AG04449 (cell line): ENCODE measurements at regions of chr20 and their contacts with region 1.

Region 1: DNA sequence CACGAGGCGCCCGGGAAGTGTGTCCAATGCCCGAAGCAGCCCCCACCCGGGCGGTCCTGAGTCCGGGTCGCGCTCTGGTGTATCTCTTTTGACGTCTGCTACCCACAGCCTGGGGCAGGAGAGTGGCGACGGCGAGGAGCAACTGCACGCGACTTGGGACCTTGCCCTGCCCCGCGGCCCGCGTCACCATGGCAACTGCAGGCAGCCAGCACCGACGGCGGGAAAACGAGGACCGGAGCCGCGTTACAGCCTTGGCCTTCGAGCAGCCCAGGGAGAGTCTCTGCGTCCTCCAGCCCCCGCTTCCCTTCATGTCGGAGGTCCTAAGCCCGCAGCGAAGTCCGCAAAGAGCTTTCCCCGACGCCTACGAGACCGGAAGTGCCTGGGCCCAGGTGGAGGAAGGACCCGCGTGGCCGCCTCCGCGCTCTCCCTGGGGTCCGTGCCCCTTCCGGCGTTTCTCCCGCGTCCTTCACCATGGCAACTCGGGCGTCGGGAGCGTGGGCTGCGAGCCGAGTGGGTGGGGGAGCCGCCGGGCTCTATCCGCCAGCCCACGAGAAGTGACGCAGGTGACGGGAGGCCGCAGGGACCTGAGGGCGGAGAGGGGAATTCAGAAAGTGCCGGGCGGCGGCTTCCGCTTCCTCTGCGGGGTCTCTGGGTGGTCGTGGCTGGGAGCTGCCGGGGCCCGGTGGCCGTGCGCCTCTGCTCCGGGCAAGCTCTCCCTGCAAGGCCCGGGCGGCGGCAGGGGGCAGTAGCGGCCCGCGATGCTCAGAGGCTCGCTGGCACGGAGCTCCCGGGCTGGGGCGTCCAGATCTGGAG is 88.6 kb upstream of the TGM3 start:
- DNase-seq: no peak
- H3K4me3 ChIP-seq: peak overlapping the region; percentile 62
- CTCF ChIP-seq: peak; percentile 97

Region 2: DNA sequence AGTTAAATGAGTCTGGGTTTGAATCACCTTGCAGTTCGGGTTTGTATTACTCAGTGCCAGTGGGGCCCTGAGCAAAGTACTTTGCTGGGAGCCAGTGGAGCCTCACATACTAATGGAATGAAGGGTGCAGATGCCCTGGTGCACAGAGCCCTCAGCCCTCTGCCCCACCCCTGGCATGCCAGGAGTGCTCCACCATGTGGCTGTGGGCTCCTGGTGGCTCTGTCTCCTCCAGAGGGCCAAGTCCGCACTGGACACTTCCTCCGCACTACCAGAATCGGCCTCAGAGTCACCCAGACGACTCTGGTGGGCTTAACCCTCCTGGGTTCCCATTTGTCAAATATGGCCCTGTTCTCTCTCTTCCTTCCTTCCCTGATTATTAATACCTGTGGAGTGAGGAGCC is 11.5 kb before region 1 on chr20:
- CTCF ChIA-PET with region 1: interaction called, 32 read pairs
- POLR2A ChIA-PET with region 1: no interaction called
- DNase-seq: no peak
- H3K4me3 ChIP-seq: no peak overlapping the region
- CTCF ChIP-seq: no peak

Region 3: DNA sequence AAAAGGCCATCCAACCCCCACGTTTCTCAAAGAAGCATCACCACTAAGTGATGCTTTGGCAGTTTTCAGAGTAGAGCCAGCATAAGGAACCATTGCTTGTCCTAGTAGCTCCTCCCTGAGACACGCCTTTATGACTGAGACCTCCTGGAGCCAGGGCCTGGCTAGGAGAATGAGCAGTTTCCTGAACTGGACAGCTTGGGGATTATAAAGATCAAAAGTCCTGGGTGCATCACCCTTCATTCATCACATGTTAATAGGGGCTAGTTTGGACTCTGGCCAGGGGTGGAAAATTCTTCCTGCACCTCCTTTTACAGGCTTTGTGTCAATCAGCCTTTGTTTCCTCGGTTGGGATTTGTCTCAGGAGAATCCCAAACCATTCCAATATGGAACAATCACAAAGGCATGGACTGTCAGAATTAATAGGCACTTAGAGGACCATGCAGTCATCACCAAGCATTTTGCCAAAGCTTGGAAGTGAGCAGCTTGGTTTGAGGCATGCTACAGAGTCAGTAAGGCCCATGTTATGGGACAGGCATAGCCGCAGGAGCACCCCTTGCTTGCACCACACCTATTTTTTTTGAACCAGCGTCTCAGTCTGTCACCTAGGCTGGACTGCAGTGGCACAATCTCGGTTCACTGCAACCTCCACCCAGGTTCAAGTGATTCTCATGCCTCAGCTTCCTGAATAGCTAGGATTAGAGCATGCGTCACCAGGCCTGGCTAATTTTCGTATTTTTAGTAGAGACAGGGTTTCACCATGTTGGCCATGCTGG is 23.7 kb after region 1 on chr20:
- CTCF ChIA-PET with region 1: interaction called, 28 read pairs
- POLR2A ChIA-PET with region 1: no interaction called
- DNase-seq: no peak
- H3K4me3 ChIP-seq: no peak overlapping the region
- CTCF ChIP-seq: no peak

Region 4: DNA sequence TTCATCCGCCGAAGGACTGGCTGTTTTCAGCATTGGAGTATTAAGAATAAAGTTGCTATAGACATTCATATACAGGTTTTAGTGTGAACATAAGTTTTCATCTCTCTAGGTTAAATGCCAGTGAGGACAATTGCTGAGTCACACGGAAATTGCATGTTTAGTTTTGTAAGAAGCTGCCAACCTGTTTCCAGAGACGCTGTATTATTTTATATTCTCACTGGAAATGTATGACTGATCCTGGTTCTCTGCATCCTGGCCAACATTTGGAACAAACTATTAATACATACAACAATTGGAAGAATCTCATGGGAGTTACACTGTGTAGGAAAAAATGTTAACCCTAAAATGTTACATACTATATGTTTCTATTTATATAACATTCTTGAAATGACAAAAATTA is 156.9 kb after region 1 on chr20:
- CTCF ChIA-PET with region 1: interaction called, 12 read pairs
- POLR2A ChIA-PET with region 1: no interaction called
- DNase-seq: peak; percentile 16
- H3K4me3 ChIP-seq: no peak overlapping the region
- CTCF ChIP-seq: no peak

Region 5: DNA sequence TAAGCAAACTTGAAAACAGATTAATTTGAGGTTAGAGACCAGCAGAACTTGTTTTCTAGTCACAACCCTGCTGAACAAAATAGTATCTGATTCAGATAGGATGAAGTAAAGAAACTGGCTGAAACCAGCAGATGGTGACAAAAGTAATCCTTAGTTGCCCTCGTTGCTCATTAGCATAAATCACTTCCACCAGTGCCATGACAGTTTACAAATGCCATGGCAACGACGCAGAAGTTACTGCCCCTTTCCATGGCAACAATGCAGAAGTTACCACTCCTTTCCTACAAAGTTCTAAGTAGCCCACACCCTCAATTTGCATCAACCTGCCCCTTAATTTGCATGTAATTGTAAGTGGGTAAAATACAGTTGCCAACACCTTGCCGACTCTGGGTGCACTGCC is 239.7 kb after region 1 on chr20:
- CTCF ChIA-PET with region 1: interaction called, 191 read pairs
- POLR2A ChIA-PET with region 1: no interaction called
- DNase-seq: no peak
- H3K4me3 ChIP-seq: no peak overlapping the region
- CTCF ChIP-seq: no peak

Region 6: DNA sequence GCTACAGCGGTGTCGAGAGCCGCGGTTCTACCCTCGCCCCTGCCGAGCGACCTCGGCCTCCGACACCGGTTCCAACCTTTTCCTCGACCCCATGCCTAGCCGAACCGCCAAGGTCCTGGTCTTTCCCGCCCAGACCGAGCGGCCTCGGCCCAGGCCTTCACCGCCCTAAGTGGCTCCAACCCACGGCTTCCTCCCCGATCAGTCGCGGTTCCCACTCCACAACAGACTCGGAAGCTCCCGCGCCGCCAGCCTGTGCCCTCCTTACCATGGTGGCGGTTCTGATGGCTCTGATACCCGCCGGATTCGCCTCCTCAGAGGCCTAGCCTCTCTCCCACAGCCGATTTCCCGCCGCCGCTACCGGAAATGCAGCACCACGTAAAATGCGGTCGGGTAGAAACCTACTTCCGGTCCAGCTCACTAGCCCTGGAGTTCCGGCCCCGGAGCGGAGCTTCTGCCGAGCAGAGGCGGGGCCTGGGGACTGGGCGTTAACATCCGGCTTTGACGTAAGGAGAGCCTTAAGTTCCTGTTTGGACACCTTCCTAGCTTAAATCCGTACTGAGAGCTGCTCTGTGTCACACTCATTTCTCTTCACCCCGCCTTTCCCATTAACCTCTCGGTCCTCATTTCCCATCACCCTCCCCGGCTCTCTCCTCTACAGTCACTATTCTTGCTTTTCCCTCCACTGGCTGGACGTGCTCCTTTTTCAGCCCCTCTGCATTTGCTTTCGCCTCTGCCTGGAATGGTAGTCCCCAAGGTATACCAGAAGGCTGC is 263.4 kb after region 1 on chr20 and contains the start of gene SNRPB:
- CTCF ChIA-PET with region 1: interaction called, 15 read pairs
- POLR2A ChIA-PET with region 1: no interaction called
- DNase-seq: peak; percentile 97
- H3K4me3 ChIP-seq: peak within 1 kb of the TSS; percentile 97
- CTCF ChIP-seq: no peak

Region 7: DNA sequence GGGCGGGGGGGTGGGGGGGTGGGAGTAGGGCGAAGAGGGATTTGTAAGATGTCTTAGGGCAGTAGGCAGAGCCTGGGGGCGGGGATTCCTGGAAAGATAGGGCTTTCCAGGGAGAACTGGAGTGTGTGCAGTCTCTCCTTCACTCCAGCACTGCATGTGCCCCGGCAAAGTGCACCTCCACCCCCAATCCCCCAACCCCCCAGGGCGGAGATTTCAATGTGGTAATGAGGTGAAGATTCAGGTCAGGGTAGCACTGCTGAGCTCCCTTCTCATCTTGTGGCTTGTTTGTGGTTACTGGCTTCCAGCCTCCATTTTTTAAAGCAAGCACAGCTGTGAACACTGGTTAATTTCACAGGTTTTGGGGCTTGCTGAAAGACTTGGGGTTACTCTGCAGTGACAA is 614.9 kb after region 1 on chr20:
- CTCF ChIA-PET with region 1: no interaction called
- POLR2A ChIA-PET with region 1: no interaction called
- DNase-seq: no peak
- H3K4me3 ChIP-seq: no peak overlapping the region
- CTCF ChIP-seq: no peak